Posterior cingulate gyrus (tissue), 11 donors: ENCODE measurements at regions of chr1 and their contacts with region 1.

Region 1: GRCh38 chr1:27725374-27726173 is at the start of gene FAM76A:
- DNase-seq: peak; percentile 99 to 100 (median 100)

Region 2: GRCh38 chr1:27658951-27659496 is 66.5 kb before region 1 on chr1:
- intact Hi-C with region 1: no loop called
- DNase-seq: peak in 1 of 10 donors; percentile 52

Region 3: GRCh38 chr1:27668808-27669723 is 56.5 kb before region 1 on chr1:
- intact Hi-C with region 1: loop called (anchors 1 kb)
- DNase-seq: peak; percentile 68 to 97 (median 84)

Region 4: DNA sequence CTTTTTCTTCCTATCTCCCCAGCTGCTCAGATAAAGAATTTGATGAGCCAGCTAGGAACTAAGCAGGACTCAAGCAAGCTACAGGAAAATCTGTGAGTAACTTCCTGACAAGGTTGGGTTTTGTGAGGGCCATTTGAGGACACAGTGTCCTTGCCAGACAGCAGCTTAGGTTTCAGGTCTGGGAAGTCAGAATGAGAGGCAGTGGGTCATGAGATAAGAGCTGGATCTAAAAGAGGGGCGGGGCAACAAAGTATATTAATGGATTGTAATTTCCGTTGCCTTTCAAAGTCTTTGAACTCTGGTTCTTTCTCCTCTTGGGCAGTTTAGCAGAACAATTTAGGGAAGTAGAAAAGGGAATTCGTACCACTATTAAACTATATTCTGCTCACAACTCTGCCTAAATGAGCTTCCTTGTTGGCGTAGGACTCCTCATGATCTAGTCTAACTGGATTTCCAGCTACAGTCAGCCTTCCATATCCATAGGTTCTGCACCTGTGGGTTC is 64.0 kb after region 1 on chr1:
- intact Hi-C with region 1: no loop called
- DNase-seq: no peak